GM18951 (cell line): ENCODE measurements at regions of chrX and their contacts with region 1.

Region 1: DNA sequence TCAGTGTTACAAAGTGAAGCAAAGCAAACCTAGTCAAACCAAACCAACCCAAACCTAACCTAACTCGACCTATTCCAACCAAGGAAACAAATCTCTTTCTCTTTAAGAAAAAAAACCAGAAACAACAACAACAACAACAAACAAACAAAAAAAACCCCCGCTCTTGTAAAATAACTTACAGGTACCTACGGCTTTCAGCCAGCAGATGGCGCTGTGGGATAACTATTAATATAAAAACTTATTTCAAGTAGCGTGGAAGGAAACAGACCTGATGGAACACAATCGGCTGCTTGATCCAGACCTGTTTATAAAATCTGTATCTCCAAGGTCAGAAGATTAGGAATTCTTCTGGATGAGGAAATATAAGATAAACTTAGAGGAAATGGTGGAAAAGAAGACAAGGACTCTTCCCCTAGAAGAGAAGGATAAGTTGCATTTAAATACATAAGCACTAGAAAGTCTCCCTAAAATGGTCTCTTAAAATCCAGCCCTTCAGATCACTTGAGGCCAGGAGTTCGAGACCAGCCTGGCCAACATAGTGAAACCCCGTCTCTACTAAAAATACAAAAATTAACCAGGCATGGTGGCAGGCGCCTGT is 34.4 kb upstream of the CDKL5 start:
- POLR2A ChIP-seq: no peak

Region 2: GRCh38 chrX:18255059-18255458 is 136.0 kb before region 1 on chrX:
- in situ Hi-C with region 1: no loop called
- POLR2A ChIP-seq: no peak

Region 3: GRCh38 chrX:18630934-18631333 is 239.9 kb after region 1 on chrX:
- in situ Hi-C with region 1: no loop called
- POLR2A ChIP-seq: no peak

Region 4: DNA sequence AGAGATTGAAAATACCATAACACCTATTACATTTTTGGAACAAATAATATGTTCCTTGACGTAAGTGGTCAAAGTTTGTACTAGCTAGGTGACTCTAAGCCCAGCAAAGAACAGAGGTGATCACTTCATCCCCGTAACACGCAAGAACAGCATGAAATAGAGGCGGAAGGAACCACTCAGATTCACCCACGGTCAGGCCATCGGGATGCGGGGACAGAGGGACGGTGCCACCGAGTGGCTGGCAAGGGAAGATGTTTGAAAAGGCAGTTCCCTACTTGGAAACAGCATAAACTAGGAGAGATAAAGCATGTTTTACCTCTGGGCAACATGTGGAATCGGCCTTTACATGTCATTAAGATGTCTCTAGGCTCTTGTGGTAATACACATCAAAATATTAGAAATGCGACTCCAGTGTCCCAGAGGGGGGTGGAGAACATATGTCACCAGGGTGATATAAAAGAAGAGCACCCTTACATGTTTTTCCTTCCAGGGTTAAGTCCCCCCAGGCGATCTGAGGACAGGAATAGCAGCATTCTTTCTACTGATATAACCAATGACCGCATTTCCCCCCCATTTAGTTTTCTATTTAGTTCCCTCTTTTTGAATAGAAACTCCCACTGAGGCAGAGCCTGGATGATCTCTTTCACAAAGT is 508.9 kb after region 1 on chrX:
- in situ Hi-C with region 1: loop called (anchors 25 kb)
- POLR2A ChIP-seq: no peak

Region 5: GRCh38 chrX:19017271-19017670 is 626.2 kb after region 1 on chrX:
- in situ Hi-C with region 1: loop called (anchors 10 kb)
- POLR2A ChIP-seq: no peak

Region 6: DNA sequence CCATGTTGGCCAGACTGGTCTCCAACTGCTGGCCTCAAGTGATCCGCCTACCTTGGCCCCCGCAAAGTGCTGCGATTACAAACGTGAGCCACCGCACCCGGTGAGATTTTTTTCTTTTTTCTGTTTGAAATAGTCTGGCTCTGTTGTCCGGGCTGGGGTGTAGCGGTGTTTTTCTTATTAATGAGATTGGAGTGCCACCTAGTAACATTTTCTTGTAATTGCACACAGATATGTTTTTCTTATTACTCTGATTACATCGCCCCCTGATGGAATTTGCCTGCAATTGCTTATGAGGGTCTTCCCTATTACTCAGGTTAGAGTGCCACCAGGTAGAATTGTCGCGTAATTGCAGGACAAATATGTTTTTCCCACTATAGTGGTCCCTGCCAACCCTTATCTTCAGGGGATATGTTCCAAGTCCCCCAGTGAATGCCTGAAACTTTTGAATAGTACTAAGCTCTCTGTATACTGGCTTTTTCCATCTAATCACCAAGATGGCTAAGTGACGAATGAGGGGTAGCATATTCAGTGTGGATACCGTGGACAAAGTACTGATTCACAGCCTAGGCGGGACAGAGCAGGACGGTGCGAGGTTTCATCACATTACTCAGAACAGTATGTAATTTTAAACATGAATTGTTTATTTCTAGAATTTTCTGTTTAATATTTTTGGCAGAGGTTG is 944.0 kb after region 1 on chrX:
- in situ Hi-C with region 1: loop called (anchors 10 kb)
- POLR2A ChIP-seq: no peak

Region 7: DNA sequence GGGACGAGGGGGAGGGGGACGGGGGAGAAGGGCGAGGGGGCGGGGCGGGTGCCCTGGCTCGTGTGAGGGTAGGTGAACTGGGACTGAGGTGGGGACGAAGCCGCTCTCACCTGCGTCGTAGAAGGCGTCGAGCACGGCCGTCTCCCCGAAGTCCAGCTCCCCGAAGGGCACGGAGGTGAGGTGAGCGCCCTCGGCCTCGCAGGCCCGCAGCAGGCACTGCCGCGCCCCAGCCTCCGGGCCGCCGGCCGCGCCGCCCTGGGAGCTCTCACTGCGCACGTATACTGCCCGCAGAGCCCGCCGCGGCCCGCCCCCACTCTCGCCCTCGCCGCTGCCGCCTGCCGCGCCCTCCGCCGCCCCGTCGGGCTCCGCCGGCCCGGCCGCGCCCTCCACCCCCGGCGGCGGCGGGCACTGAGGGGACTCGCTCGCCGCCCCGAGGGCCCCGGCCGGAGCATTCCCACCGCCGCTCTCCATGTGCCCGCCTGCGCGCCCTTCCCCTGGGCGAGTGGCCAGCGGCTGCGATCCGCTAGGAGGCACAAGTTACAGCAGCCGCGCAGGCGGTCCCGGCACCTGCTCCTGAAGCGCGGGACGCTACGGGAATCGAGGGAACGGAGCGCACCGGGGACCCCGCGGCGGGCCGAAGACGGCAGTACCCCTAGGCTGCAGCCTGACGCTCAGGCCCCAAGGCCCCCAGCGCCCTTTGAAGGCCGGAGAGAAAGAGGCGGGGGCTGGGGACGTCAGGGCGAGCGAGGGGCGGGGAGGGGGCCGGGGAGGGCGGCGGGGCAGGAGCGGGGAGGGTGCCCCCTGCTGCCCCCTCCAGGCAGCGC is 1124.0 kb after region 1 on chrX and contains the start of gene MAP3K15:
- in situ Hi-C with region 1: loop called (anchors 25 kb)
- POLR2A ChIP-seq: no peak